Mammary epithelial cell (primary cell): ENCODE measurements at regions of chr2 and their contacts with region 1.

Region 1: DNA sequence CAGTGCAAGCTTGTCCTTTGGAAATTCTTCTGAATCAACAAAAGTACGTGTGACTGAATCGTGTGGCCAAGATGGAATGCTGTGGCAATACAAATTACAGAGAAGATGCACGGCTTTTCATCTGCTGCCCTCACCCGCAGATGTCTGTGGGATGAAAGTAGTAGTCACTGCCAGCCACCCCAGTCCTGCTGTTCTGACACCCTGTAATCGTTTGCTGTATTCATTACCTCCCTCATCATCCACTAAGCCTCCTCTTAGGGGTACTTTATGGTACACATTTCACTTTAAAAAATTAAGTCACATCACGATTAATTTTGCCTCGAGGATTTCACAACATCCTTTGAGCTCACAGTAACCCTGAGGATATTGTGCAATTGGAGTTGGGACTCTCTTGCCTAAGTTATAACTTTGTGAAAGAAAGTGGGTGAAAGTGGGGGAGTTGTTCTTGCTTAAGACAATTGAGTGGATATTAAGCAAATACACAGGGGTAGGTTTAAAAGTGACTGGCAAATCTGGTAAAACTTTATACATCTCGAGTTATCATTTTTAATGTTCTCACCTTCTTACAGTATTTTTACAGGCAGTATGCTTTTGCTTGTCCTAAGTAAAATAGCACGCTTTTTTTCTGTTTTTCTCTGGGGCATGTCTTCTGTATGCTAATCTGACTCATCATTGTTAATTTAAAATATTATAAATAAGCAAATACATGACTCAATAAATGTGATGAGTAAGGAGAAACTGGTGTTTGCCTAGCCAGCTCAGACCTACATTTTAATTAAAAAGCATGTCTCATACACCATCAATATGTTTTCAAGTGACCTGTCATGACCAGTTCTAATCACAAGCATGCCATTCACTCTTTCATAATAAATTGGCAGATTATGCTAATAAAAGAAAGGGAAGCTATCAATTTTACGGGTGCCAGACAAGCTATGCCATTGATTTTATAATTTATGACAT is 680.9 kb downstream of the IRS1 start:
- DNase-seq: peak; percentile 94
- H3K4me3 ChIP-seq: peak overlapping the region in 2 of 3 experiments; percentile 5 to 23
- H3K27ac ChIP-seq: peak overlapping the region; percentile 97
- H3K4me1 ChIP-seq: peaks cover 48% of the 10 kb centered on the region
- H3K27me3 ChIP-seq: no peaks in the 10 kb centered on the region
- CTCF ChIP-seq: no peak

Region 2: DNA sequence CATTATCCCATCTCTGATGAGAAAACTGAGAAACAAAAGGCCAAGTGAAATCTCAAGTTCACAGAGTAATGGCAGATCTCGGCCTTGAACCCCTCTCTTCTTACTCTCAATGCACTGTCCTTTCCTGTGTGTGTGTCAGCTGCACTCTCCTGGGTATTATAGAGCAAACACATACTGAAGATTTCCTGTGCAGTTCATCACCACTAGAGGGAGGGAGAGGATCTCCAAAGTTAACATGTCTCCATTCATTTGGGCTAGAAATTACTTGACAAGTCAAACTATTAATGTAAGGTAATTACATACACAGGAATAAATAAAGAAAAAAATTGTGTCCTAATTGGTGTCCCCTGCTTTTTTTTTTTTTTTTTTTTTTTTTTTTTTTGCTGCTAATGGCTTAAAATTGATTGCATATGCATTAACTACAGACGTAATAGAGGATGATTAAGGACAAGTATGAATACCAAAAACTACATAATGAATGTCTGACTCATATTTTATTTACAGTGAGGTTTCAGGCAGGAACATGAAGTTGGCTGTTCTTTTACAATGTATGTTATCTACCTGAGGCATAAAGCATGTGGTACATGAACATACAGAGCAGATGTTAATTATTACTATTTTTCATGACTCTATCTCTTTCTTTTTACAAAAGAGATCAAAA is 450.0 kb before region 1 on chr2:
- CTCF ChIA-PET with region 1: interaction called, 3 read pairs
- dilution Hi-C with region 1: no loop called
- in situ Hi-C with region 1: no loop called
- intact Hi-C with region 1: loop called (anchors 5 kb)
- DNase-seq: peak; percentile 71
- H3K4me3 ChIP-seq: no peak overlapping the region
- H3K27ac ChIP-seq: peak overlapping the region; percentile 62
- H3K4me1 ChIP-seq: peaks cover 4% of the 10 kb centered on the region
- H3K27me3 ChIP-seq: no peaks in the 10 kb centered on the region
- CTCF ChIP-seq: peak; percentile 87 to 94

Region 3: DNA sequence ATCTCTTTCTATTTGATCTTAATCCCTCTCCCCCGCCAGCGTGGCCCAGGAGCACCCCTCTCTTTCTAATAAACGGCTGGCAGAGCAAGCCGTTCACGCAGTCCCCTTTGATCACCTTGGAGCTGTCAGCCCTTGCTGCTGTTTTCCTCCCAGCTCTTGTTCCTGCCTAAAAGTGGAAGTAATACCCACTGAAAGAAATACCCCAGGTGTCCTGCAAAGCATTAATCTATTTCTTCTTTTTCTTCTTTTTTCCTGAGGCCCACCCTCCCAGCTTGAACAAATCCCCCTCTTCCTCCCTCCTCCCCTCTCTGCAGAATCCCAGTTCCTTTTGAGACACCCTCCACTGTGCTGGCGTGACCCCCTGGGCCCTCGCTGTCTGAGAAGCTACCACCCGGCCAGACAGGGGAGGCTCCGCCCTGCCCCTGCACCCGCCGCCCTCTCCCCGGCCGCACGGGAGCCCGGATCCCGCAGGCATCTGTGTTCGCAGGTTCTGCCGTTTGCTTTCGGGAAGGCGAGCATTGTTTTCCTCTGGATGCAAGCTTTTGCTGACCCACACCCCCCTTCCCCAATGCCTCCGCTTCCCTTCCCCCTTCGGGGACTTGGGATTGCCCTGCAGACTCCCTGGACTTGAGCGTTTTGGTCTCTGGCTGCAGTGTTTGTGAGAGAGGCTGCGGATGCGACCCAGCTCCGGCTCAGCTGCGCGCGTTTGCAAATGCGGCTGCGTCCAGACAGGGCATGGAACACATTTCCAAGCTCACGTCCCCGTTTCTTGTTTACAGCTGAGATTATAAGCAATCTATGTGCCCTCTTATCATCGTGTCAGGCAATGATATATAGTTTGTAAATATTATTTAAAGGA is 87.7 kb before region 1 on chr2:
- CTCF ChIA-PET with region 1: no interaction called
- dilution Hi-C with region 1: no loop called
- in situ Hi-C with region 1: no loop called
- intact Hi-C with region 1: loop called (anchors 2 kb)
- DNase-seq: peak; percentile 42
- H3K4me3 ChIP-seq: peak overlapping the region; percentile 37 to 63 (median 47)
- H3K27ac ChIP-seq: peak overlapping the region; percentile 67
- H3K4me1 ChIP-seq: peaks cover 22% of the 10 kb centered on the region
- H3K27me3 ChIP-seq: no peaks in the 10 kb centered on the region
- CTCF ChIP-seq: no peak

Region 4: DNA sequence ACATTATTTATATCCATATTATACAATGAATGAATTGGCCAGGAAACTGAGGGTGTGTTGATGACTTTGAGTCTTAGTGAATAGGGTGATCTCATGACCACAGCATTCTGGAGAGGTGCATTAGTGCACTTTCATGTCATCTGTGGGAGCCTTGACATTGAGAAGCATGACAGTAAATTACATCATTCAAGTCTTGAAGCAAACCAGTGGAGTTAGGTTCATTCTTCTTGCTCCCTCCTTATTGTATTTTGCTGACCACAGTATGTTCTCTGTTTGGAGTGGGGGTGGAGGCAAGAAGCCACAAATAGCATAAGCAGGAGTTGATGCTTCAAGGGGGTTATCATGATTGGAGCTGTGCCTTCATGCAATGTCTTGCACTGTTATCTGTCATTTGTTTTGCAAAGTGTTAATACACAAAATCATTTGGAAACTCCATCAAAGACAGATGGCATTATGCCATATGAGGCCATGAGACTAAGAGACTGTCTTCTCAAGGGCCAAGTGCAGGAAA is 39.0 kb before region 1 on chr2:
- CTCF ChIA-PET with region 1: no interaction called
- dilution Hi-C with region 1: no loop called
- in situ Hi-C with region 1: no loop called
- intact Hi-C with region 1: loop called (anchors 1 kb)
- DNase-seq: peak; percentile 96
- H3K4me3 ChIP-seq: no peak overlapping the region
- H3K27ac ChIP-seq: peak overlapping the region; percentile 94
- H3K4me1 ChIP-seq: peaks cover 46% of the 10 kb centered on the region
- H3K27me3 ChIP-seq: no peaks in the 10 kb centered on the region
- CTCF ChIP-seq: no peak

Region 5: GRCh38 chr2:226159754-226160479 is 41.2 kb after region 1 on chr2:
- CTCF ChIA-PET with region 1: no interaction called
- dilution Hi-C with region 1: no loop called
- in situ Hi-C with region 1: no loop called
- intact Hi-C with region 1: no loop called
- DNase-seq: no peak
- H3K4me3 ChIP-seq: peak overlapping the region in 1 of 3 experiments; percentile 7
- H3K27ac ChIP-seq: no peak overlapping the region
- H3K4me1 ChIP-seq: no peaks in the 10 kb centered on the region
- H3K27me3 ChIP-seq: no peaks in the 10 kb centered on the region
- CTCF ChIP-seq: no peak

Region 6: GRCh38 chr2:226185616-226186211 is 67.0 kb after region 1 on chr2:
- CTCF ChIA-PET with region 1: no interaction called
- dilution Hi-C with region 1: no loop called
- in situ Hi-C with region 1: no loop called
- intact Hi-C with region 1: loop called (anchors 2 kb)
- DNase-seq: peak; percentile 83
- H3K4me3 ChIP-seq: no peak overlapping the region
- H3K27ac ChIP-seq: peak overlapping the region; percentile 99
- H3K4me1 ChIP-seq: peaks cover 15% of the 10 kb centered on the region
- H3K27me3 ChIP-seq: no peaks in the 10 kb centered on the region
- CTCF ChIP-seq: no peak

Region 7: GRCh38 chr2:226411727-226412360 is 293.1 kb after region 1 on chr2:
- CTCF ChIA-PET with region 1: no interaction called
- dilution Hi-C with region 1: no loop called
- in situ Hi-C with region 1: no loop called
- intact Hi-C with region 1: loop called (anchors 1 kb)
- DNase-seq: peak; percentile 93
- H3K4me3 ChIP-seq: no peak overlapping the region
- H3K27ac ChIP-seq: peak overlapping the region; percentile 81
- H3K4me1 ChIP-seq: peaks cover 19% of the 10 kb centered on the region
- H3K27me3 ChIP-seq: no peaks in the 10 kb centered on the region
- CTCF ChIP-seq: no peak

Region 8: DNA sequence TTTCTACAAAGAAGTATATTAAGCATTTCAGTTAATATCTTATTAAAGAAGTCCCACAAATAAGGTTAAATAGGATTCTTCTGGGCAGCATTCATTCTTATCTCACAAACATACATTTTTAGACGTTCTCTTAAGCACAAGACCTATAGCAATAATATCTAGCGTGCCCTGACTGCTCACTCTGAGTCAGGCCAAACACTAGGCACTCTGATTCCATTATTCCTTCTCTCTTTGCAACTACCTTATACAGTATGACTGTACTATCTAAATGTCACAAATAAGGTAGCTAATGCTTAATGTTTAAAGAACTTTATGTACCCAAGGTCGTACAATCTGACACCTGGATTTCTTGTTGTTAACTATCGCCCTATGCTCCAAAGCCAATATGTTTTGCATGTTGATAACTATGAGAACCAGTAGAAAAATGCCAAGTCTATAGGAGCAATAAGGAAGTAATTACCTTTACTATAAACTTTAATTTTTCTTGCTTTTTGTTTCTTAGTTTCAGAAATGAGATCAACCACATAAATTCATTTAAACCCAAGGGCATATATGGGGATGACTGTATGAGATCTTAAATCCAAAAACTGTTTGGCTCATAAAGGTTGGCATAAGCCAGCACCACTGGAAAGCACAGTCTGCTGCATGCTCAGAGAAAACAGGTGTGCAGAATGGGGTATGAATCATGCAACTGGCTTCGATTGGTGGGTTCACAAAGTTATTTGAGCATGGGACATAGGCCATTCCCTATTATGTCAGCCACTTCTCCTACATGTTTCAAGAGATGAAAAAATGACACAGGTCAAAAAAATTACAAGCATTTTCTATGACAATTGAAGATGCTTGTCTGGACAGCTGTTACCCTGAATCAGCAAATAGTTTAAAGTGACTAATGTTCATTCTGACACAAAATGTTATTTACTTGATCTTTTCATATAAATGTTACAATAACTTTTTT is 328.9 kb after region 1 on chr2:
- CTCF ChIA-PET with region 1: no interaction called
- dilution Hi-C with region 1: no loop called
- in situ Hi-C with region 1: no loop called
- intact Hi-C with region 1: loop called (anchors 5 kb)
- DNase-seq: peak; percentile 93
- H3K4me3 ChIP-seq: no peak overlapping the region
- H3K27ac ChIP-seq: peak overlapping the region; percentile 75
- H3K4me1 ChIP-seq: peaks cover 17% of the 10 kb centered on the region
- H3K27me3 ChIP-seq: no peaks in the 10 kb centered on the region
- CTCF ChIP-seq: no peak